Activated CD4-positive, alpha-beta memory T cell treated with anti-CD3 and anti-CD28 coated beads for 36 hours (primary cell): ENCODE measurements at regions of chr4 and their contacts with region 1.

Region 1: GRCh38 chr4:87848622-87849351 is 16.0 kb downstream of the MEPE start:
- DNase-seq: peak; percentile 48
- H3K4me3 Mint-ChIP-seq: peak overlapping the region; percentile 40
- H3K27ac Mint-ChIP-seq: no peak overlapping the region
- H3K4me1 Mint-ChIP-seq: peaks cover 5% of the 10 kb centered on the region
- H3K27me3 Mint-ChIP-seq: peaks cover 25% of the 10 kb centered on the region

Region 2: GRCh38 chr4:87150498-87151261 is 698.1 kb before region 1 on chr4:
- CTCF ChIA-PET with region 1: no interaction called
- POLR2A ChIA-PET with region 1: no interaction called
- intact Hi-C with region 1: loop called (anchors 5 kb)
- DNase-seq: no peak
- H3K4me3 Mint-ChIP-seq: no peak overlapping the region
- H3K27ac Mint-ChIP-seq: no peak overlapping the region
- H3K4me1 Mint-ChIP-seq: no peaks in the 10 kb centered on the region
- H3K27me3 Mint-ChIP-seq: no peaks in the 10 kb centered on the region

Region 3: DNA sequence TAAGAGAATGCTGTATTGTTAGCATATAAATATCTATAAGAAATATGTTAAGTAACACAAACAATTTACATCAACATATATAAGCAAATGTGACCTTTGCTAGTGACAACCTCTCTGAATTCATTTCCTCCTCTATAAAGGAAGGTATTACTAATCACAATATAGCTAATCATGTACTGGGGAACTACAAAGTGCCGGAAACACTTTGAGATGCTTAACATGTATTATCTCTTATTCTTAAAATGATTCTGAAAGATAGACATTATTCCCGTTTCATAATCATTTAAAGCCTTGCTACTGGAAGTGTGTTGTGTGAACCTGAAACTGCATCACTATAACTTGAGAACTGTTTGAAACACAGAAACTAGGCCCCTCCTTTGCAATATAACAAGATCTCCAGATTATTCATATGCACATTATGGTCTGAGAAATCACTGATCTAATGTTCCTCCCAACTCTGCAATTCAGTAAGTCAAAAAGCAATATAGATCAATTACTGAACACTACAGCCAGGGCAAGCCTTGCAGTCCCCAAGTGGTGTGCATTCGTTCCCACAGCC is 682.4 kb before region 1 on chr4:
- CTCF ChIA-PET with region 1: no interaction called
- POLR2A ChIA-PET with region 1: no interaction called
- intact Hi-C with region 1: no loop called
- DNase-seq: no peak
- H3K4me3 Mint-ChIP-seq: no peak overlapping the region
- H3K27ac Mint-ChIP-seq: no peak overlapping the region
- H3K4me1 Mint-ChIP-seq: peaks cover 18% of the 10 kb centered on the region
- H3K27me3 Mint-ChIP-seq: no peaks in the 10 kb centered on the region

Region 4: GRCh38 chr4:87375719-87376291 is 473.0 kb before region 1 on chr4:
- CTCF ChIA-PET with region 1: no interaction called
- POLR2A ChIA-PET with region 1: no interaction called
- intact Hi-C with region 1: loop called (anchors 10 kb)
- DNase-seq: no peak
- H3K4me3 Mint-ChIP-seq: no peak overlapping the region
- H3K27ac Mint-ChIP-seq: no peak overlapping the region
- H3K4me1 Mint-ChIP-seq: no peaks in the 10 kb centered on the region
- H3K27me3 Mint-ChIP-seq: no peaks in the 10 kb centered on the region

Region 5: GRCh38 chr4:87543835-87544461 is 304.8 kb before region 1 on chr4:
- CTCF ChIA-PET with region 1: no interaction called
- POLR2A ChIA-PET with region 1: no interaction called
- intact Hi-C with region 1: loop called (anchors 5 kb)
- DNase-seq: no peak
- H3K4me3 Mint-ChIP-seq: no peak overlapping the region
- H3K27ac Mint-ChIP-seq: no peak overlapping the region
- H3K4me1 Mint-ChIP-seq: no peaks in the 10 kb centered on the region
- H3K27me3 Mint-ChIP-seq: no peaks in the 10 kb centered on the region

Region 6: DNA sequence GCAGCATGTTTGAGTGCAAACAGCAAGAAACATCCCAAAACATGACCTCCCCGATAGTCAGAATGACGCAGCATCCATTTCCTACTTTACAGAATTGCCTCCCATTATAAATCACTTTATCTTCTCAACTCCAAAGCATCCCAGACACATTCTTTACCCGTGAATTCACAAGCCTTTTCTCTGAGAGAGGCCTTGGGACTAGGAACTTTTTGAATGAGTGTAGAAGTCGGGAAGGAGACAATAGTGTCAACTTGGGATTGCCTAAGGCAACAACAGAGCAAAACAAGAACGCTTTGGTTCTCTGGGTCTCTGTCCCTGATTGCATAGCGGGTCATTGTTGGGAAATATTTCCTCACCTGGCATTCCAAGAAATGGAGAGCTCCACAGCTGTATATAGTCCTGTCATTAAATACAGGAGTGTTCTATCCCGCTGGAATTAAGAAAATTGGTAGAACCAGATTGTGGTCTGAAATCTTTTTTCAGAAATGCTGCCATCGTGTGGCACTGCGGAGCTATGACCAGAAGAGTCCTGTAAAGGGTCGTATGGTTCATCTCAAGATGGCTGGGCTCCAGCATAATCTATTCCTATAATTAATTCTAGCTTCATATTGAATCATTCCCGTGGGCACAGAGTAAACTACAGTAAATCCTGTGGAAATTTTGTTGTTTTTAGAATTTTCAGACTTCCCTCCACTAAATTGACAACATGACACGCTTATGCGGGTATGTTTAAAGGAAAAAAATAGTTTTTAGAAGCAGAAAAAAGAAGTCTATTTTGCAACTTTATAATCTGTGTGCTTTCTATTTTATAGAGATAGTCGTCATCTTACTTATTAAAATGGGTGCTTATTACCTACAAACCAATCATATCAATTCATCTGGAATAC is 124.7 kb after region 1 on chr4:
- CTCF ChIA-PET with region 1: interaction called, 32 read pairs
- POLR2A ChIA-PET with region 1: no interaction called
- intact Hi-C with region 1: loop called (anchors 1 kb)
- DNase-seq: peak; percentile 51
- H3K4me3 Mint-ChIP-seq: no peak overlapping the region
- H3K27ac Mint-ChIP-seq: no peak overlapping the region
- H3K4me1 Mint-ChIP-seq: peaks cover 4% of the 10 kb centered on the region
- H3K27me3 Mint-ChIP-seq: peaks cover 33% of the 10 kb centered on the region